PC-3 (cell line): ENCODE measurements at regions of chr9 and their contacts with region 1.

Region 1: GRCh38 chr9:71911253-71912074 is at the start of gene C9orf85:
- DNase-seq: peak; percentile 98
- ATAC-seq: peak; percentile 88
- H3K4me3 ChIP-seq: peak within 1 kb of the TSS; percentile 87
- H3K27ac ChIP-seq: peak within 1 kb of the TSS; percentile 79
- H3K4me1 ChIP-seq: peaks cover 10% of the 10 kb centered on the region; the same call in 1 of the 2 replicates
- H3K27me3 ChIP-seq: no peaks in the 10 kb centered on the region
- CTCF ChIP-seq: no peak
- total RNA-seq, gene C9orf85: 7.9 and 13.4 TPM in 2 replicates

Region 2: GRCh38 chr9:71819115-71819739 is 92.2 kb before region 1 on chr9:
- CTCF ChIA-PET with region 1: no interaction called
- POLR2A ChIA-PET with region 1: no interaction called
- intact Hi-C with region 1: loop called (anchors 2 kb)
- DNase-seq: peak; percentile 51
- ATAC-seq: no peak
- H3K4me3 ChIP-seq: no peak overlapping the region
- H3K27ac ChIP-seq: no peak overlapping the region
- H3K4me1 ChIP-seq: peaks cover 8% of the 10 kb centered on the region
- H3K27me3 ChIP-seq: no peaks in the 10 kb centered on the region
- CTCF ChIP-seq: peak; percentile 75

Region 3: DNA sequence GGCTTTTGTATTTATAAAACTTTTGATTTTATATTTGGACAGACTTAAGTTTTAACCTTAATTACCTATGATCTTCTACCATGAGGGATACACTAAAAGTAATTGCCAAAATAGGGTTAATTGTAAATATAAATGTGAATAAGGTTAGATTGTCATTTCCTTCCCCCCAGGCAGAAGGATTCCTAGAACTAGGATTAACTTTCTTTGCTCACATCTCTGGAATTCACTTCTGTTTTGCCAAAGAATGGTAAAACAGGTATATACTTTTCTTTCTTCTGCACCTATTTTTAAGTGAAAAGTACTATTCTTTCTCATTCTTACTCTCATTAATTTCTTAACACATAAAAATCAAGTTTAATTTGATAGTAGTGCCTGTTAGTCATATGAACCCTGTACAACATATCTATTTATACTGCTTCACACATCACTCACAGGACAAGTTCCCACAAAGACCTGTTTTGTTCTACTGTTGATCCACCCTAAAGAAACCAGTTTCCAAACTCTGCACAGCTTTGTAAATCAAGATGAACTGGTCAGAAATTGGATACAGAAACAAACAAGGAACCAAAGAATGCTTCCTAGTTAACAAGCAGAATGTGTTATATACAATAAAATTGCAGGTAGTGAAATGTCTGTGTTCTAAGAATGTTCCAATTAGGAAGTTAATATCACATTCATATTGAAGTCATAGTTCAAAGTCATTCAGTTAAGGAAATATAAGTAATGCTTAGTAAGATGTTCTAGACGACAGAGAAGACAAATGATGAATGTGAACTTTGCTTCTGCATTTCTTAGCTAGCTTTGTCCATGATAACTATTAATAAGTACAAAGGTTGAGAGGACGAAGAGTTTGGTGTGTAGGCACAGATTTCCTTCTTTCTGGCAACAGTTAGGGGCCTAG is 33.3 kb after region 1 on chr9:
- CTCF ChIA-PET with region 1: no interaction called
- POLR2A ChIA-PET with region 1: no interaction called
- intact Hi-C with region 1: loop called (anchors 1 kb)
- DNase-seq: peak; percentile 70
- ATAC-seq: peak; percentile 83
- H3K4me3 ChIP-seq: peak overlapping the region; percentile 41; the same call in 1 of the 2 replicates
- H3K27ac ChIP-seq: peak overlapping the region; percentile 91
- H3K4me1 ChIP-seq: peaks cover 34% of the 10 kb centered on the region
- H3K27me3 ChIP-seq: no peaks in the 10 kb centered on the region
- CTCF ChIP-seq: no peak

Region 4: GRCh38 chr9:72022841-72023240 is 111.4 kb after region 1 on chr9:
- CTCF ChIA-PET with region 1: no interaction called
- POLR2A ChIA-PET with region 1: no interaction called
- intact Hi-C with region 1: loop called (anchors 10 kb)
- DNase-seq: peak; percentile 64
- ATAC-seq: peak; percentile 81
- H3K4me3 ChIP-seq: no peak overlapping the region
- H3K27ac ChIP-seq: no peak overlapping the region
- H3K4me1 ChIP-seq: peaks cover 8% of the 10 kb centered on the region; the same call in 1 of the 2 replicates
- H3K27me3 ChIP-seq: no peaks in the 10 kb centered on the region
- CTCF ChIP-seq: no peak

Region 5: DNA sequence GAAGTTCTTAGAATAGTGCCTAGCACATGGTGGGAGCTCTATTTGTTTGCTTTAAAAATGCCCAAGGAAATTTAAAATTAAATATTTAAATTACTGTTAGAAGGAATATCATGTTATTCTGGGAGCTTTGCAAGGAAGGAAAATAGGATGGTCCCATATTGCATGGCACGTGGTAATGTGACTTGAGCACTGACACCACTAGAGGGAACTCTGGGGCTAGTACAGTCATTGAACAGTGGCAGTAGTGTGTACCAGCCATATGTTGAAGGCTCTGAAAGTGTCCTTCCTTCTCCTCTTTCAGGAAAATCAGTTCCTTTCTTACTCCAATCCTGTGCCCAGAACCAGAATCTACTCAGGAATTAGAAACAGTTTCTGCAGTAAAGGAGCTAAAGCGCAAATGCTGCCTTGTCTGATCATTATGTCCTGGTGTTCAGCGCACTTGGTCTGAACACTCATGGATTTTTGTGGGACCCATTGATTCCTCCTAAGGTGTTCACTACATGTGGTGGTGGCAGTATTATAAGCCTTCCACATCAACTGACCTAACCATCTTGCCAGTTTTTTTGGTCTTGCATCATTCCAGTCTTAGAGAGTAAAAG is 291.8 kb after region 1 on chr9:
- CTCF ChIA-PET with region 1: no interaction called
- POLR2A ChIA-PET with region 1: no interaction called
- intact Hi-C with region 1: no loop called
- DNase-seq: peak; percentile 56
- ATAC-seq: peak; percentile 96
- H3K4me3 ChIP-seq: no peak overlapping the region
- H3K27ac ChIP-seq: no peak overlapping the region
- H3K4me1 ChIP-seq: no peaks in the 10 kb centered on the region
- H3K27me3 ChIP-seq: peaks cover 17% of the 10 kb centered on the region
- CTCF ChIP-seq: peak; percentile 67

Region 6: GRCh38 chr9:72228282-72228681 is 316.8 kb after region 1 on chr9:
- CTCF ChIA-PET with region 1: no interaction called
- POLR2A ChIA-PET with region 1: no interaction called
- intact Hi-C with region 1: no loop called
- DNase-seq: no peak
- ATAC-seq: no peak
- H3K4me3 ChIP-seq: no peak overlapping the region
- H3K27ac ChIP-seq: no peak overlapping the region
- H3K4me1 ChIP-seq: no peaks in the 10 kb centered on the region
- H3K27me3 ChIP-seq: peaks cover 40% of the 10 kb centered on the region
- CTCF ChIP-seq: no peak

Region 7: DNA sequence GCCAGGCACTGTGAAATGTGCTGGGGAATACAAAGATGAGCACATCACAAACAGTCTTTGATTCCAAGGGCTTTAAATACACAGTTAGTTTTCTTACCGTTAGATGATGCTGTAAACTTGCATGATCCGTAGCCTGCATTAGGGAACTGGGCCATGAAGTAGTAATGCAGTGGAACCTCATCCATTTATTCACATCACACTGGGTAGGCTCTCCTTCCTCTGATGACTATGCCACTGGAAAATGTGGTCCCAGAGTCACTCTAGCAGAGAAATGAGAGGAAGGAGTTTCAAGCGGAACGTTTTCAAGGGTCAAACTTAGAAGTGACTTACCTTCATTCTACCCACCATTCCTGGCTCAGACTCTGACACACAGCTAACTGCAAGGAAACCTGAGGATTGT is 427.2 kb after region 1 on chr9:
- CTCF ChIA-PET with region 1: no interaction called
- POLR2A ChIA-PET with region 1: no interaction called
- intact Hi-C with region 1: no loop called
- DNase-seq: no peak
- ATAC-seq: no peak
- H3K4me3 ChIP-seq: no peak overlapping the region
- H3K27ac ChIP-seq: no peak overlapping the region
- H3K4me1 ChIP-seq: no peaks in the 10 kb centered on the region
- H3K27me3 ChIP-seq: no peaks in the 10 kb centered on the region
- CTCF ChIP-seq: no peak

Region 8: DNA sequence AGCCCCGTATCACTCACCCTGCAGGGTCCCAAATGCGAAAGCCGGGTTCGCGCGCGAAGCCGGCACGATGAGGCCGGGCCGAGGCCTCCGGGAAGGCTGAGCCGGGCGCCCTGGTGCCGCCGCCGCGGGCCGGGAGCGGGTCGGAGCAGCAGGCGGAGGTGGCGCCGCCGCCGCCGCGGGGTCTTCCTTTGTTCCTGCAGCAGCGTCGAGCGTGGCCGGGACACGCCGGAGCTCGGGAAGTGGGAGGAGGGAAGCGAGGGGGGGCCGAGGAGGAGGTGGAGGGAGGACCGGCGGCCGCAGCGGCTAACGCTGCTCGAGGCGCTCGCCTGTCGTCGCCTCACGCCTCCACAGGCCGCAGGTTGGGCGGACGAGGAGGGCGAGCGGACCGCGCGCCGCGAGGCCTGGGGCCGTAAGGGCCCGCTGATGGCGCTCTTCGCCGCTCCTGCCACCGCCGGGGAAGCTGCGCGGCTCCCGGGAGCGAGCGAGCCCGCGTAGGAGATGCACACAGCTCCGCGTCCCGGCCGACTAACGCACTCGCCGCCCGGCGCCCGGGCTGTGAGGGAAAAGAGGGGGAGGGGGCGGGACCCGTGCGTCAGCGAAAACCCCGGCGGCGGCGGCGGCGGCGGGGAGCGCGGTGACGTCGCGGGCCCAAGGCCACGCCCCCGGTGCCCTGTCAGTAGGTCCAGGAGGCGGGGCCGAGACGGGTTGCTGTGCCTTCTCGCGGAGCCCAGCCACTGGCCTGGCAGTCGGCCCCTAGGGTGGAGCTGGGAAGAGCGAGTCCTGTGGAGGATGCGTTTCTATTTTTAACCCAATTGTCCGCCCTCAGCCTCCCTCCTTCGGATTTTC is 453.4 kb after region 1 on chr9 and contains the start of gene ZFAND5:
- CTCF ChIA-PET with region 1: no interaction called
- POLR2A ChIA-PET with region 1: interaction called, 10 read pairs
- intact Hi-C with region 1: no loop called
- DNase-seq: peak; percentile 93
- ATAC-seq: peak; percentile 85
- H3K4me3 ChIP-seq: peak within 1 kb of the TSS; percentile 98
- H3K27ac ChIP-seq: peak within 1 kb of the TSS; percentile 98
- H3K4me1 ChIP-seq: peaks cover 19% of the 10 kb centered on the region; the same call in 1 of the 2 replicates
- H3K27me3 ChIP-seq: no peaks in the 10 kb centered on the region
- CTCF ChIP-seq: no peak
- total RNA-seq, gene ZFAND5: 84.1 and 88.8 TPM in 2 replicates

Region 9: DNA sequence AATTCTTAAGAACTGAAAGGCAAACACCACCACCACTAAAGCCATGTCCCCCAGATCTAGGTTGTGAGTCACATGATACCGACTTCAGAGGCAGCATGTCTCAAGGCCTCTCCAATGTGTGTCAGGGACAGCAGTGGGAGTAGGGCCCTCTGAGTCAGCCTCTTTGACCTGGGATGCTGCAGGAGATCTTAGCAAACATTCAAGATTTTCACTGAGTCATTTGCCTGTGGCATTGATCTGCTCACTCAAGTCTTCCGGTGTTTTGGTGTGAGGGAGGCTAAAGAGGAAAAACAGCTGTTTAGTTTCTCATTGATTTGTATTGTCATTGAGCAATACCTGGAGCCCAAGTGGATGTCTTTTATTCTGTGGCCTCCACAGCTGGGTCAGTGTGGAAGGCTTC is 646.1 kb after region 1 on chr9:
- CTCF ChIA-PET with region 1: no interaction called
- POLR2A ChIA-PET with region 1: no interaction called
- intact Hi-C with region 1: no loop called
- DNase-seq: peak; percentile 94
- ATAC-seq: peak; percentile 89
- H3K4me3 ChIP-seq: no peak overlapping the region
- H3K27ac ChIP-seq: peak overlapping the region; percentile 78
- H3K4me1 ChIP-seq: peaks cover 31% of the 10 kb centered on the region
- H3K27me3 ChIP-seq: no peaks in the 10 kb centered on the region
- CTCF ChIP-seq: no peak